B cell (primary cell): ENCODE measurements at regions of chr7 and their contacts with region 1.

Region 1: DNA sequence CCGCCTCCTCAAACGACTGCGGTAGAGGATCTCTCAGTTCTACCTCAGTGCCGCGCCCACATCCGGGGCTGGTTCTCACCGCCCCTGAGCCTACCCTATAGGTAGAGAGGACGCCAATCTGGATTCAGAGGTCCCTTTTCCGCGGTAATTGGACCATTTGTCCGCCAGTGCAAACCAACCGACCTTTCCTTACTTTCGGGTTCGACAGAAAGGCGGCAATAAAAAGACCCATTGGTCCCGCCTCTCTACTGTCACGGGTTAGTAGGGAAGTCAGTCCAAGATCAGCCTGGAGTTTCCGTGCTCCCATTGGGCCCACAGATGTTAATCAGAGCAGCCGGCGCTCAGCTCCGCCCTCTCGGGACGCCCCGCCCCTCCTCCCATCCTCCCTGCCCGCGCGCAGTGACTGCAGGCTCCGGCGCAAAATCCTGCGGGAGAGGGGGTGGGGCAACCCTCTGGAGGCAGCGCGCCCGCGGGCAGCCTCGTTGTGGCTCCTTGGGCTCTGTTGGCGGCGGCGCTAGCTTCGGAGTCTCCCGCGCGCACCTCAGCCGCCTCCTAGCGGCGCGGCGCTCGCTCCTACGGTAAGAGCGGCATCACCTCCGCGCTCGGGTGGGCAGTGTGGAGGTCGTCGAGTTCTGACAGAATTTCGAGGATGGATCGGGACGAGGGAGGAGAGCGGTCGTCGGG is at the starts of genes PHTF2 and TMEM60:
- DNase-seq: peak; percentile 97
- ATAC-seq: peak; percentile 86
- H3K4me3 ChIP-seq: peak within 1 kb of the TSS; percentile 79 to 97 (median 91)
- H3K4me3 Mint-ChIP-seq: peak within 1 kb of the TSS; percentile 91
- H3K27ac ChIP-seq: peak within 1 kb of the TSS; percentile 77 to 87
- H3K27ac Mint-ChIP-seq: peak within 1 kb of the TSS; percentile 92
- H3K4me1 ChIP-seq: peaks cover 46 to 49% of the 10 kb centered on the region in 2 donors
- H3K4me1 Mint-ChIP-seq: peaks cover 79% of the 10 kb centered on the region
- H3K27me3 ChIP-seq: no peaks in the 10 kb centered on the region
- H3K27me3 Mint-ChIP-seq: no peaks in the 10 kb centered on the region
- CTCF ChIP-seq: peak; percentile 74
- total RNA-seq, gene PHTF2: 44.8 and 49.6 TPM in 2 replicates
- total RNA-seq, gene TMEM60: 18.9 and 20.4 TPM in 2 replicates

Region 2: GRCh38 chr7:77188731-77189437 is 609.7 kb before region 1 on chr7:
- CTCF ChIA-PET with region 1: no interaction called
- POLR2A ChIA-PET with region 1: no interaction called
- intact Hi-C with region 1: no loop called
- DNase-seq: no peak
- ATAC-seq: no peak
- H3K4me3 ChIP-seq: no peak overlapping the region
- H3K4me3 Mint-ChIP-seq: no peak overlapping the region
- H3K27ac ChIP-seq: no peak overlapping the region
- H3K27ac Mint-ChIP-seq: no peak overlapping the region
- H3K4me1 ChIP-seq: peaks cover 24 to 25% of the 10 kb centered on the region in 2 donors
- H3K4me1 Mint-ChIP-seq: peaks cover 27% of the 10 kb centered on the region
- H3K27me3 ChIP-seq: no peaks in the 10 kb centered on the region
- H3K27me3 Mint-ChIP-seq: no peaks in the 10 kb centered on the region
- CTCF ChIP-seq: no peak

Region 3: GRCh38 chr7:77536413-77537135 is 262.0 kb before region 1 on chr7:
- CTCF ChIA-PET with region 1: no interaction called
- POLR2A ChIA-PET with region 1: no interaction called
- intact Hi-C with region 1: loop called (anchors 1 kb)
- DNase-seq: peak; percentile 96
- ATAC-seq: peak; percentile 89
- H3K4me3 ChIP-seq: peak overlapping the region; percentile 88 to 96 (median 95)
- H3K4me3 Mint-ChIP-seq: peak overlapping the region; percentile 99
- H3K27ac ChIP-seq: peak overlapping the region; percentile 75 to 81
- H3K27ac Mint-ChIP-seq: peak overlapping the region; percentile 98
- H3K4me1 ChIP-seq: peaks cover 8 to 28% of the 10 kb centered on the region in 2 donors
- H3K4me1 Mint-ChIP-seq: peaks cover 27% of the 10 kb centered on the region
- H3K27me3 ChIP-seq: no peaks in the 10 kb centered on the region
- H3K27me3 Mint-ChIP-seq: no peaks in the 10 kb centered on the region
- CTCF ChIP-seq: no peak

Region 4: GRCh38 chr7:77696198-77697028 is 102.1 kb before region 1 on chr7 and contains the start of gene RSBN1L:
- CTCF ChIA-PET with region 1: interaction called, 4 read pairs
- POLR2A ChIA-PET with region 1: interaction called, 3 read pairs
- intact Hi-C with region 1: loop called (anchors 1 kb)
- DNase-seq: peak; percentile 97
- ATAC-seq: peak; percentile 94
- H3K4me3 ChIP-seq: peak within 1 kb of the TSS; percentile 72 to 100 (median 84)
- H3K4me3 Mint-ChIP-seq: peak within 1 kb of the TSS; percentile 98
- H3K27ac ChIP-seq: peak within 1 kb of the TSS; percentile 89 to 90
- H3K27ac Mint-ChIP-seq: peak within 1 kb of the TSS; percentile 97
- H3K4me1 ChIP-seq: peaks cover 20 to 35% of the 10 kb centered on the region in 2 donors
- H3K4me1 Mint-ChIP-seq: peaks cover 54% of the 10 kb centered on the region
- H3K27me3 ChIP-seq: no peaks in the 10 kb centered on the region
- H3K27me3 Mint-ChIP-seq: no peaks in the 10 kb centered on the region
- CTCF ChIP-seq: peak; percentile 61
- total RNA-seq, gene RSBN1L: 47.0 and 55.0 TPM in 2 replicates

Region 5: DNA sequence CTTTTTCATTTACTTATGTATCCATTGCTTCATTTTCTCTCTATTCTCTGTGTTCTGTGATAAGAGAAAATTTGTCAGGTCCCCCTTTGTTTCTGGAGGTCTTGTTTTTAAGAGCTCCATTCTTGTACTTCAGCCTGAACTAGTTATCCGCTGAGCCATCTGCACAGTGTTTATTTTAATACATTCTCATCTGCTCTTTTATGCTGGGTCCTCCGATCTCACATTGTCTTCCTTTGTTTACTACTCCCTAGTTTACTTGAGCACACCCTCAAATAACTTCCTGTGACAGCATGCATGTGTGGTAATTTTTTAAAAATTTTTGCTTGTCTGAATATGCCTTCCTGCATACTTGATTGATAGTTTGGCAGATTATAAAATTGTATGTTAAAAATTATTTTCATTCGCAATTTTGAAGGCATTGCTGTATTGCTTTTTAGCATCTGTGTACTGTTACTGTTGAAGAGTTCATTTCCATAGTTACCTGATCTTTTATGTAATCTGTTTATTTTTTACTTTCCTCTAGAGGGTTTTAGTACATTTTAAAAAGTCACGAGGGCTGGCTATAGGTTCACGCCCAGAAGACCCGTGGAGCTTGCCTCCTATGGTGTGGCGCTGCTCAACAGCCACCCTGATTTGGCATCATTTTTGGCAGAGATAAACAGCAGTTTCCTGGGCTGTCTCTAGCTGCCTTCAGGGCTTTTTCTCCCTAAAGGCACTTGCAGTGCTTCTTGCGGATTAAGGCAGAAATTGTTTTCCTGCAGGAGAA is 70.4 kb before region 1 on chr7:
- CTCF ChIA-PET with region 1: no interaction called
- POLR2A ChIA-PET with region 1: no interaction called
- intact Hi-C with region 1: no loop called
- DNase-seq: no peak
- ATAC-seq: no peak
- H3K4me3 ChIP-seq: no peak overlapping the region
- H3K4me3 Mint-ChIP-seq: no peak overlapping the region
- H3K27ac ChIP-seq: peak overlapping the region in 1 of 2 donors; percentile 20
- H3K27ac Mint-ChIP-seq: peak overlapping the region; percentile 5
- H3K4me1 ChIP-seq: peaks cover 12 to 17% of the 10 kb centered on the region in 2 donors
- H3K4me1 Mint-ChIP-seq: peaks cover 45% of the 10 kb centered on the region
- H3K27me3 ChIP-seq: no peaks in the 10 kb centered on the region
- H3K27me3 Mint-ChIP-seq: no peaks in the 10 kb centered on the region
- CTCF ChIP-seq: no peak

Region 6: DNA sequence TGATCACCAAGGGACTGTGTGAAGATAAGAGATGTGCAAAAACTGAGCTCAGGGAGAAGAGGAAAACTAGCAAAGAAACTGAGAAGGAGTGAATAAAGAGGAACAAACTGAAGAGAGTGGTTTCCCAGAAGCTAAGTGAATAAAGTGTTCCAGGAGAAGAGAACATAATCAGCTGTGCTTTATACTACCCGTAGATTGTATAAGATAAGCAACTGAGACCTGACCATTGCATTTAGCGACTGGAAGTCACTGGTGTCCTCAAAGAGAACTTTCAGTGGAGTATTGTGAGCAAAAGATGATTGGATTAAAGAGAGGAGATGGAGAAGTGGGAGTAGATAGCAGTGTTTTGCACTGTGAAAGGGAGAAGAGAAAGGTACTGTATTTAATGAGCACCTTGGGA is 14.6 kb after region 1 on chr7:
- CTCF ChIA-PET with region 1: interaction called, 3 read pairs
- POLR2A ChIA-PET with region 1: no interaction called
- intact Hi-C with region 1: loop called (anchors 1 kb)
- DNase-seq: no peak
- ATAC-seq: no peak
- H3K4me3 ChIP-seq: no peak overlapping the region
- H3K4me3 Mint-ChIP-seq: peak overlapping the region; percentile 54
- H3K27ac ChIP-seq: peak overlapping the region in 1 of 2 donors; percentile 48
- H3K27ac Mint-ChIP-seq: peak overlapping the region; percentile 64
- H3K4me1 ChIP-seq: peaks cover 13 to 14% of the 10 kb centered on the region in 2 donors
- H3K4me1 Mint-ChIP-seq: peaks cover 52% of the 10 kb centered on the region
- H3K27me3 ChIP-seq: no peaks in the 10 kb centered on the region
- H3K27me3 Mint-ChIP-seq: no peaks in the 10 kb centered on the region
- CTCF ChIP-seq: no peak

Region 7: DNA sequence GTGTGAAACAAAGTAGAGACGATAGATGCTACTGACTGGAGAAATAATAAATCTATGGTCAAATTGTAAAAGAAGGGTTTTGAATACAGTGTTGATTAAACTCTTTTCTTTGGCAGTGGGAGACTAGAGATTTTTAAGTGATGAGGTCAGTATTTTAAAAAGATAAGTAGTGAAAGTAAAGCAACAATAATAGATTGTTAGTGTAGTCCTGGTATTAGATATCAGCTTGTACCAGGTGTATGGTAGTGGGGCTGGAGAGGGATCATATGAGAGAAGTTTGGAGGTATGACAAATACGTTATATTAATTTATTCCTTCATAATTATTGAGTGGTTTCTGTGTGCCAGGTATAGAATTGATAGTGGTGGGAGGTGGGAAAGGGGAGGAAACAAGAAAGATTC is 25.3 kb after region 1 on chr7:
- CTCF ChIA-PET with region 1: interaction called, 11 read pairs
- POLR2A ChIA-PET with region 1: interaction called, 20 read pairs
- intact Hi-C with region 1: loop called (anchors 1 kb)
- DNase-seq: no peak
- ATAC-seq: peak; percentile 34
- H3K4me3 ChIP-seq: peak overlapping the region; percentile 9 to 71 (median 38)
- H3K4me3 Mint-ChIP-seq: peak overlapping the region; percentile 86
- H3K27ac ChIP-seq: peak overlapping the region; percentile 87 to 90
- H3K27ac Mint-ChIP-seq: peak overlapping the region; percentile 98
- H3K4me1 ChIP-seq: peaks cover 58 to 66% of the 10 kb centered on the region in 2 donors
- H3K4me1 Mint-ChIP-seq: peaks cover 70% of the 10 kb centered on the region
- H3K27me3 ChIP-seq: no peaks in the 10 kb centered on the region
- H3K27me3 Mint-ChIP-seq: no peaks in the 10 kb centered on the region
- CTCF ChIP-seq: no peak

Region 8: GRCh38 chr7:77837290-77837689 is 38.8 kb after region 1 on chr7:
- CTCF ChIA-PET with region 1: interaction called, 5 read pairs
- POLR2A ChIA-PET with region 1: interaction called, 8 read pairs
- intact Hi-C with region 1: loop called (anchors 5 kb)
- DNase-seq: no peak
- ATAC-seq: no peak
- H3K4me3 ChIP-seq: no peak overlapping the region
- H3K4me3 Mint-ChIP-seq: no peak overlapping the region
- H3K27ac ChIP-seq: no peak overlapping the region
- H3K27ac Mint-ChIP-seq: no peak overlapping the region
- H3K4me1 ChIP-seq: peaks cover 25 to 45% of the 10 kb centered on the region in 2 donors
- H3K4me1 Mint-ChIP-seq: peaks cover 59% of the 10 kb centered on the region
- H3K27me3 ChIP-seq: no peaks in the 10 kb centered on the region
- H3K27me3 Mint-ChIP-seq: no peaks in the 10 kb centered on the region
- CTCF ChIP-seq: no peak

Region 9: DNA sequence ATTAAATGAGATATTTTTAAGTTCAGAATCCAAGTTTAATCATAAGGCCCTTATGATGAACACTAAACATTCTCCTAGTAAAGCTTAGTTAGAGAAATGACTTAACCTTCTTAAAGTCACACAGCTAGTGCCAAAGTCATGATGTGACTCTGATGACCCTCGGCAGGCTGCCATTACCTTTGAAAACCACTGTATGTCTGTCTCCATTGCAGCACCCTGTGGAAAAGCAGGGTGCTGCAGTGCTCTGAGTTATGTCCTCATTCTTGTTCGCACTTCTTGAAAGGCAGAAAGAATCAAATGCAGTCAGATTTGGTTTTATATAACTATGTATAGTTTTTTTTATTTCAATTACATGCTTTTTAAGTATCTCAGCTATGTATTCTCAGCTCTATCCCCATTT is 105.1 kb after region 1 on chr7:
- CTCF ChIA-PET with region 1: interaction called, 13 read pairs
- POLR2A ChIA-PET with region 1: no interaction called
- intact Hi-C with region 1: loop called (anchors 1 kb)
- DNase-seq: peak; percentile 49
- ATAC-seq: no peak
- H3K4me3 ChIP-seq: no peak overlapping the region
- H3K4me3 Mint-ChIP-seq: no peak overlapping the region
- H3K27ac ChIP-seq: peak overlapping the region in 1 of 2 donors; percentile 77
- H3K27ac Mint-ChIP-seq: peak overlapping the region; percentile 66
- H3K4me1 ChIP-seq: peaks cover 17 to 34% of the 10 kb centered on the region in 2 donors
- H3K4me1 Mint-ChIP-seq: peaks cover 45% of the 10 kb centered on the region
- H3K27me3 ChIP-seq: no peaks in the 10 kb centered on the region
- H3K27me3 Mint-ChIP-seq: no peaks in the 10 kb centered on the region
- CTCF ChIP-seq: peak; percentile 25

Region 10: DNA sequence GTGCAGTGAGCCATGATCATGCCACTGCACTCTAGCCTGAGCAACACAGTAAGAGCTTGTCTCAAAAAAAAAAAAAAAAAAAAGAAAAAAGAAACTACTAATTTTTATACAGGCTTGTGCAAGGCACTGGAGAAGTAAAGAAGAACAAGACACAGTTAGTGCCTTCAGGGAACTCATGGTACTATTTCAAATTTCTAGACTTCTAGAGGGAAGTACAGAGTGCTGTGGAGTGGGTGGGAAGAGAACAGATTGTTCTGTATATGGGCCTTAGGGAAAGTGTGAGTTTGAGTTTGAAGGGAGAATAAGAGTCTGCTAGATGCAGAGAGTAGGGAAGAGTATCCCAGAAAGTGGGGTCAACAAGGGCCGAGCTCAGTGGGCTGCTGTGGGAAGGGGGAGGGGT is 234.9 kb after region 1 on chr7:
- CTCF ChIA-PET with region 1: no interaction called
- POLR2A ChIA-PET with region 1: no interaction called
- intact Hi-C with region 1: no loop called
- DNase-seq: no peak
- ATAC-seq: no peak
- H3K4me3 ChIP-seq: no peak overlapping the region
- H3K4me3 Mint-ChIP-seq: no peak overlapping the region
- H3K27ac ChIP-seq: no peak overlapping the region
- H3K27ac Mint-ChIP-seq: no peak overlapping the region
- H3K4me1 ChIP-seq: no peaks in the 10 kb centered on the region
- H3K4me1 Mint-ChIP-seq: no peaks in the 10 kb centered on the region
- H3K27me3 ChIP-seq: no peaks in the 10 kb centered on the region
- H3K27me3 Mint-ChIP-seq: peaks cover 23% of the 10 kb centered on the region
- CTCF ChIP-seq: no peak

Region 11: GRCh38 chr7:78499283-78499682 is 700.7 kb after region 1 on chr7:
- CTCF ChIA-PET with region 1: no interaction called
- POLR2A ChIA-PET with region 1: no interaction called
- intact Hi-C with region 1: no loop called
- DNase-seq: no peak
- ATAC-seq: no peak
- H3K4me3 ChIP-seq: no peak overlapping the region
- H3K4me3 Mint-ChIP-seq: no peak overlapping the region
- H3K27ac ChIP-seq: no peak overlapping the region
- H3K27ac Mint-ChIP-seq: no peak overlapping the region
- H3K4me1 ChIP-seq: no peaks in the 10 kb centered on the region
- H3K4me1 Mint-ChIP-seq: no peaks in the 10 kb centered on the region
- H3K27me3 ChIP-seq: no peaks in the 10 kb centered on the region
- H3K27me3 Mint-ChIP-seq: no peaks in the 10 kb centered on the region
- CTCF ChIP-seq: no peak